ENCODE measurements at regions of chr19 and their contacts with region 1.

Region 1: DNA sequence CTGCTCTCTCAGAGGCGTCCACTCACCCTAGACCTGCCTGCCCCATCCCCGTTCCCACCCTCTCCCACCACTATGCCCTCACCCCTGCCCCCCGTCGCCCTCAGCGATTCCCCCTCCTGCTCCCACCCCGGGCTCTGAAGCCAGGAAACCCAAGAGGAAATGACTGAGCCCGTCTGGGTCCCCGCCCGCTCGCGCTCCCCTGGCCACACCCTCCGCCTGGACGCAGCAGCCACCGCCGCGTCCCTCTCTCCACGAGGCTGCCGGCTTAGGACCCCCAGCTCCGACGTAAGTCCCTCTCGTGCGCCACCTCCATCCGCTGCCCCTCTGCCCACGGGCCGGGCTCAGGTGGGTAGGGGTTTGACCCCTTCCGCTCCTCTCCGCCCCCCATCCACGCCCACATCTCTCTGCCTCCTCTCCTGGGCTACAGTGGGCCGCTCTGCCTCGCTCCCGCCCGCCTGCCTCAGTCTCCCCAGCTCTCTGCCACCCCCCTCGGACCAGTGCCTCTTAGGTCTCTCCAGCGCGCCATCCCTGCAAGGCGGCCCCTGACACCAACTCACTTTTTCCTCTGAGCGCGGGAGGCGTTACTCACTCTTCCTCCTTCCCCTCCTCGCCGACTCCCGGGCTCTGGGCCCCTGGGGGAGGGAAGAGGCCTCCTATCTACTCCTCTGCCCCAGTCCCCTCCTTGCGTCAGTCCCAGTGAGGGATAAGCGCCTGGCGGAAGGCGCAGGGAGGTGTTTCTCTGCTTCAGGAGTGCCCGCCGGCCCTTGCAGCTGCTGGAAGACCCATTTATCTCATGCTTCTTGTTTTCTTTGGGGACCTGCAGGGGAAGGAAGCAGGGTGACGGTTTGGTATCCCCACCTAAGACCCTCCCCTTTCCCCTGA is at the start of gene FXYD5:
- DNase-seq: peak; percentile 41 to 81 (median 65)
- ATAC-seq: peak; percentile 82
- H3K4me3 ChIP-seq: peak within 1 kb of the TSS; percentile 93
- H3K4me3 Mint-ChIP-seq: peak within 1 kb of the TSS; percentile 98 to 100 (median 99)
- H3K27ac ChIP-seq: peak within 1 kb of the TSS; percentile 94
- H3K27ac Mint-ChIP-seq: peak within 1 kb of the TSS; percentile 96 to 99 (median 99)
- H3K4me1 ChIP-seq: peaks cover 23 to 32% of the 10 kb centered on the region in 2 donors
- H3K4me1 Mint-ChIP-seq: peaks cover 38 to 60% (median 55%) of the 10 kb centered on the region in 7 donors
- H3K27me3 ChIP-seq: no peaks in the 10 kb centered on the region
- H3K27me3 Mint-ChIP-seq: peaks cover 0 to 5% (median 0%) of the 10 kb centered on the region in 5 donors
- total RNA-seq, gene FXYD5: 362 to 458 (median 387) TPM

Region 2: GRCh38 chr19:35114353-35115176 is 40.2 kb before region 1 on chr19:
- CTCF ChIA-PET with region 1: no interaction called
- POLR2A ChIA-PET with region 1: no interaction called
- intact Hi-C with region 1: loop called (anchors 1 kb)
- DNase-seq: peak; percentile 46 to 77 (median 59)
- ATAC-seq: peak; percentile 92
- H3K4me3 ChIP-seq: no peak overlapping the region
- H3K4me3 Mint-ChIP-seq: peak overlapping the region in 7 of 10 donors; percentile 2 to 49 (median 25)
- H3K27ac ChIP-seq: no peak overlapping the region
- H3K27ac Mint-ChIP-seq: peak overlapping the region in 1 of 9 donors; percentile 50
- H3K4me1 ChIP-seq: peaks cover 0 to 7% of the 10 kb centered on the region in 2 donors
- H3K4me1 Mint-ChIP-seq: peaks cover 5 to 8% (median 6%) of the 10 kb centered on the region in 7 donors
- H3K27me3 ChIP-seq: no peaks in the 10 kb centered on the region
- H3K27me3 Mint-ChIP-seq: peaks cover 0 to 20% (median 0%) of the 10 kb centered on the region in 5 donors

Region 3: DNA sequence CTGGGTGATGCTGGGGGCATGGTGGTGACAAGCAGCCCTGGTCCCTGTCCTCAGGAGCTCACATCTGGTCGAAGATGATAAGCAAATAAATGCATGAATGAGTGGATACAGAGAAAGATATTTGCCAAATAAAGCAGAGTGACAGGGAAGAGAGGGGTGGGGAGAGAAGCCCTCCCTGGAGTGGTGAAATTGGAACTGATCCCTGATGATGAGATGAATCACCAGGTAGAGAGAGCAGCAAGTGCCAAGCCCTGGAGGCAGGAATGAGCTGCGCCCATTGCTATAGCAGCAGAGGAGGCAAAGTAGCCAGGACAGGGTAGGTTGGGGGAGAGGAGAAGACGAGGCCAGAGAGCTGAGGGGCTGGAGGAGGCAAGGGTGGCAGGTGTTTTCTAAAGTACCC is 13.4 kb after region 1 on chr19:
- CTCF ChIA-PET with region 1: interaction called, 5 read pairs
- POLR2A ChIA-PET with region 1: interaction called, 28 read pairs
- intact Hi-C with region 1: loop called in 1 of 2 experiments (anchors 2 kb)
- DNase-seq: no peak
- ATAC-seq: no peak
- H3K4me3 ChIP-seq: no peak overlapping the region
- H3K4me3 Mint-ChIP-seq: peak overlapping the region in 2 of 10 donors; percentile 19 to 43
- H3K27ac ChIP-seq: peak overlapping the region; percentile 46
- H3K27ac Mint-ChIP-seq: peak overlapping the region; percentile 26 to 96 (median 91)
- H3K4me1 ChIP-seq: peaks cover 34 to 36% of the 10 kb centered on the region in 2 donors
- H3K4me1 Mint-ChIP-seq: peaks cover 23 to 55% (median 44%) of the 10 kb centered on the region in 7 donors
- H3K27me3 ChIP-seq: no peaks in the 10 kb centered on the region
- H3K27me3 Mint-ChIP-seq: no peaks in the 10 kb centered on the region

Region 4: GRCh38 chr19:35204799-35205732 is 50.3 kb after region 1 on chr19:
- CTCF ChIA-PET with region 1: interaction called, 11 read pairs
- POLR2A ChIA-PET with region 1: interaction called, 74 read pairs
- intact Hi-C with region 1: loop called in 1 of 2 experiments (anchors 1 kb)
- DNase-seq: peak in 3 of 9 donors; percentile 9 to 29 (median 11)
- ATAC-seq: peak; percentile 29
- H3K4me3 ChIP-seq: no peak overlapping the region
- H3K4me3 Mint-ChIP-seq: peak overlapping the region in 9 of 10 donors; percentile 44 to 87 (median 74)
- H3K27ac ChIP-seq: peak overlapping the region; percentile 87
- H3K27ac Mint-ChIP-seq: peak overlapping the region; percentile 93 to 100 (median 99)
- H3K4me1 ChIP-seq: peaks cover 55% of the 10 kb centered on the region in 2 donors
- H3K4me1 Mint-ChIP-seq: peaks cover 36 to 86% (median 81%) of the 10 kb centered on the region in 7 donors
- H3K27me3 ChIP-seq: no peaks in the 10 kb centered on the region
- H3K27me3 Mint-ChIP-seq: no peaks in the 10 kb centered on the region

Region 5: GRCh38 chr19:35449053-35449687 is 294.4 kb after region 1 on chr19:
- CTCF ChIA-PET with region 1: no interaction called
- POLR2A ChIA-PET with region 1: no interaction called
- intact Hi-C with region 1: no loop called
- DNase-seq: no peak
- ATAC-seq: peak; percentile 50
- H3K4me3 ChIP-seq: no peak overlapping the region
- H3K4me3 Mint-ChIP-seq: no peak overlapping the region
- H3K27ac ChIP-seq: no peak overlapping the region
- H3K27ac Mint-ChIP-seq: no peak overlapping the region
- H3K4me1 ChIP-seq: peaks cover 7 to 28% of the 10 kb centered on the region in 2 donors
- H3K4me1 Mint-ChIP-seq: peaks cover 15 to 43% (median 28%) of the 10 kb centered on the region in 7 donors
- H3K27me3 ChIP-seq: no peaks in the 10 kb centered on the region
- H3K27me3 Mint-ChIP-seq: peaks cover 8 to 50% (median 9%) of the 10 kb centered on the region in 5 donors